GM12878 (cell line): ENCODE measurements at regions of chr5 and their contacts with region 1.

Region 1: DNA sequence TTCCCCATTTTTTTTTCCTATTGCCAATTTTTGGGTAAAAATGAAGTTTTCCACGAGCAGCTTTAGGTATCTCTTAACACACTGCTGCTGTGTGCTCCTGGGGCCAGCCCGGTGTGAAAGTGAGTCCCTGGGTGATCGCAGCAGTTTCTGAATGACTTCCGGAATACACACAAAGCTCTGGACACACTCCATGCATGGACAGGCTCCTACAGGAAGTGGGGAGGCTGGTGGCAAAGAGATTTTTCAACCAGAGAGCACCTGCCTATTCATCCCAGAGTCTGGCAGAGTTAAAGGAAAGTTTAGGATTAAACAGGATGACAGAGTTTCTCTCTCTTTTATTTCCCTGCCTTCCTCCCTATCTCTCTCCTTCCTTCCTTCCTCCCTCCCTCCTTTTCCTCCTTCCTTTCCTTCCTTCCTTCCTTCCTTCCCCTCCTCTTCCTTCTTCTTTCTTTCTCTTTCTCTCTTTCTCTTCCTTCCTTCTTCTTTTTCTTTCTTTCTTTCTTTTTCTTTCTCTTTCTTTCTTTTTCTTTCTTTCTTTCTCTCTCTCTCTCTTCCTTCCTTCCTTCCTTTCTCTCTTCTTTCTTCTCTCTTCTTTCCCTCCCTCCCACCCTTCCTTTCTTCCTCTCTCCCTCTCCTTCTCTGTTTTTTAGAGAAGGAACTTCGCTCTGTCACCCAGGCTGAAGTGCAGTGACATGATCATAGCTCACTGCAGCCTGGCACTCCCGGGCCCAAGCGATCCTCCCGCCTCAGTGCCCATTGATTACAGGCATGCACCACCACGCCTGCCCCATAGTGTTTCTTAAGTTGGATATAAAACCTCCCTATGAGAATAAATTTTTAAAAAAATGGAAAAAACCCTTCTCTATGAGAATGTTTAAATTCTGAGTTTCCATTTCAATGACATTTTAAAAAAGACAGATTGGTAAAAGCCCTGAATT is 38.7 kb upstream of the UBTD2 start:
- DNase-seq: no peak
- ATAC-seq: peak; percentile 90
- H3K4me3 ChIP-seq: 0 out of 2 replicates have a peak overlapping the region, but pooled peaks have one; percentile 0
- H3K27ac ChIP-seq: peak overlapping the region; percentile 89
- H3K4me1 ChIP-seq: peaks cover 38% of the 10 kb centered on the region
- H3K27me3 ChIP-seq: no peaks in the 10 kb centered on the region
- CTCF ChIP-seq: no peak
- EP300 ChIP-seq: no peak
- POLR2A ChIP-seq: peak; percentile 46; the same call in 1 of the 2 replicates
- RAD21 ChIP-seq: no peak

Region 2: DNA sequence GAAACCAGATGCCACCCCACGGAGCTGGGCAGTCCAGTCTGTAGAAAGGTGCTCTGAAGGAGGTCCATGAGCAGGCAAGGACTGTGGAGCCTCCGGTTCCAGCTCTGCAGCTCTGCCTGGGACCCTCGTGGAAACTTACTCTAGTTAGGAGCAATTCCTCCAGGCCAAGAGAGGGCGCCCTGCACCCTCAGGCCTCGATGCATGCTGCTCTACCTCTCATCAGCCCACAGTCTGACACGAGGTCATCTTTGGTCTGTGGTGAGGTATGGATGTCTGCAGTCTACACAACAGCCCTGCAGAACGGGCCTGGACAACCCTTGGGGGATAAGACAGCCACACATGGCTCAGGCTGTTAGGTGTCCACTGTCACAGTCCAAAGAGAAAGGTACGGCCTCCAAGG is 11.9 kb after region 1 on chr5:
- CTCF ChIA-PET with region 1: interaction called, 5 read pairs
- POLR2A ChIA-PET with region 1: no interaction called
- RAD21 ChIA-PET with region 1: interaction called, 10 read pairs
- SMC1A ChIA-PET with region 1: interaction called, 13 read pairs
- in situ Hi-C with region 1: no loop called
- intact Hi-C with region 1: no loop called
- DNase-seq: no peak
- ATAC-seq: peak; percentile 68
- H3K4me3 ChIP-seq: no peak overlapping the region
- H3K27ac ChIP-seq: no peak overlapping the region
- H3K4me1 ChIP-seq: no peaks in the 10 kb centered on the region
- H3K27me3 ChIP-seq: no peaks in the 10 kb centered on the region; a peak in 1 of 4 replicates
- CTCF ChIP-seq: peak; percentile 9 to 36 (median 20); a peak in 3 of 6 replicates
- EP300 ChIP-seq: no peak
- POLR2A ChIP-seq: no peak
- RAD21 ChIP-seq: peak; percentile 38; the same call in 1 of the 2 replicates

Region 3: DNA sequence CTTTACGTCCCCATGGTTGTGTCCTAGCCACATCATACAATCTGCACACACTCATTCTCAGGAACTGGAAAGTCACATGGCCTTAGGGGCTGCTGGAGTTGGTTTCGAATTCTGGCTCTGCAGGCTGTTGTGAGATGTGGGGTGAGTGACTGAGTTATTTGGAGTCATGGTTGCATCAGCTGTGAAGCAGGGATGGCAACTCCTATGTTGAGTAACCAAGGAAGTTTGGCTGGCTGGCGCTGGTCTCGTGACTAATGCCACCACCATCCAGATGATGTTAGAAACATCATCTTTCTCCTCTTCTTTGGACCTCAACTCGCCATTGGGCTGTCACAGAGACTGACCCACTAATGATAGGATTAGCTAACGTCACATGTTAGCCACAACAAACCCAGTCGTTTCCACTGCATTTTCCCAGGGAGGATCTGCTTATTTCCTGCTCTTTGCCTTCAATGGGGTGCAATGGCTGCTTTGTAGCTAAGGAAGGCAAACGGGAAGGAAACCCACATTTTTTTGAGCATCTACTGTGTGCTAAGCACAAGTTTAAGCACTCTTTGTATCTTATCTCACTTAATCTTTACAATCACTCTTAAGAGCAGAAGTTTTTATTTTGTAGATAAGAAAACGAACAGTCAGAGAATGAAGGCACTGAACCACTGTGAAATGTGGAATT is 39.4 kb after region 1 on chr5:
- CTCF ChIA-PET with region 1: no interaction called
- POLR2A ChIA-PET with region 1: interaction called, 5 read pairs
- RAD21 ChIA-PET with region 1: no interaction called
- SMC1A ChIA-PET with region 1: no interaction called
- in situ Hi-C with region 1: no loop called
- intact Hi-C with region 1: loop called (anchors 5 kb)
- DNase-seq: peak; percentile 55
- ATAC-seq: peak; percentile 84
- H3K4me3 ChIP-seq: no peak overlapping the region
- H3K27ac ChIP-seq: peak overlapping the region; percentile 40; the same call in 1 of the 2 replicates
- H3K4me1 ChIP-seq: peaks cover 26% of the 10 kb centered on the region
- H3K27me3 ChIP-seq: no peaks in the 10 kb centered on the region
- CTCF ChIP-seq: no peak
- EP300 ChIP-seq: no peak
- POLR2A ChIP-seq: no peak
- RAD21 ChIP-seq: no peak